ENCODE measurements at regions of chr7 and their contacts with region 1.

Region 1: DNA sequence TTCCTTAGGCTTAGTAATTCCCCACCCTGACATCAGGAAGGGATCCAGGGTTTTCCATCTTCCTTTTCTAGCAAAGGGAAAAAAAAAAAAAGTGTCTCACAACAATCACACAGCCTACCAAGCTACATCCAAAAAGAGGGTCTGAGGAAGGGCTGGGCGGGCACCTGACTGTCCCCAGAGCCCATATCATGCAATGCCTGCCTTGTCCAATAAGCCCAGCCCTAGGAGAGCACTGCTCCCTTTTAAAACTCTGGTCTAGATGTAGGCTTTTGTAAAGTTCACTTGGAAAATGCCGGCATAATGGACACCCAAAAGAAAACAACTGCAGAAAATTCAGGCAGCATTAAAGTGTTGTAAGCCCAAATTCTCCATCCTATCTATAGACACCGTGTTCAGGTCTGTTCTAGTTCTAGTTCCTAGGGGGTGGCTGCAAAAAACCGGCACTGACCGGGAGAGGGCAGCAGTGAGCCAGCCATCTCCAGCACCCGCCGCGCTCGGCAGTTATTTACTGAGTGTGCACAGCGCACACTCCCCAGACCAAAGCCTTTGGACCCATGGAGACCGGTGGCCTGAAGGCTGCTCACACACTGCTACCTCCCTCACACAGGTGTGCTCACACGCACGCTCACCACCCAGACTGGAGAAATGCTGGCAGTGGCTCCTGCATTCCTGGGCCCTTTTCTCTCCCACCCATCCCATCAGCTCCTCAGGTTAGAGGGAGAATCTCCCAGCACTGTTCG is 48.7 kb downstream of the PODXL start:
- DNase-seq: peak; percentile 52
- H3K4me3 ChIP-seq: no peak overlapping the region
- H3K27ac ChIP-seq: no peak overlapping the region
- H3K4me1 ChIP-seq: no peaks in the 10 kb centered on the region
- H3K27me3 ChIP-seq: peaks cover 3% of the 10 kb centered on the region
- CTCF ChIP-seq: peak; percentile 89 to 96

Region 2: GRCh38 chr7:131603932-131604331 is 96.2 kb after region 1 on chr7:
- CTCF ChIA-PET with region 1: interaction called, 13 read pairs
- dilution Hi-C with region 1: no loop called
- in situ Hi-C with region 1: no loop called
- intact Hi-C with region 1: no loop called
- DNase-seq: peak; percentile 14
- H3K4me3 ChIP-seq: no peak overlapping the region
- H3K27ac ChIP-seq: no peak overlapping the region
- H3K4me1 ChIP-seq: peaks cover 29% of the 10 kb centered on the region
- H3K27me3 ChIP-seq: peaks cover 10% of the 10 kb centered on the region
- CTCF ChIP-seq: no peak

Region 3: GRCh38 chr7:132333301-132333700 is 825.5 kb after region 1 on chr7:
- CTCF ChIA-PET with region 1: no interaction called
- dilution Hi-C with region 1: no loop called
- in situ Hi-C with region 1: no loop called
- intact Hi-C with region 1: no loop called
- DNase-seq: no peak
- H3K4me3 ChIP-seq: no peak overlapping the region
- H3K27ac ChIP-seq: no peak overlapping the region
- H3K4me1 ChIP-seq: no peaks in the 10 kb centered on the region
- H3K27me3 ChIP-seq: peaks cover 1% of the 10 kb centered on the region
- CTCF ChIP-seq: no peak